ENCODE measurements at regions of chr7 and their contacts with region 1.

Region 1: GRCh38 chr7:69732222-69732621 is 133.9 kb downstream of the AUTS2 start:
- DNase-seq: no peak
- ATAC-seq: no peak

Region 2: GRCh38 chr7:69674701-69675182 is 57.5 kb before region 1 on chr7:
- intact Hi-C with region 1: loop called (anchors 2 kb)
- DNase-seq: no peak
- ATAC-seq: peak; percentile 21

Measured in sciatic nerve (tissue), 2 donors.